ENCODE measurements at regions of chr4 and their contacts with region 1.

Region 1: GRCh38 chr4:182143822-182144625 is 99.2 kb upstream of the TENM3 start:
- DNase-seq: no peak
- ATAC-seq: peak in 1 of 2 donors; percentile 31
- H3K4me3 ChIP-seq: peak overlapping the region; percentile 62 to 73 (median 64)
- H3K27ac ChIP-seq: no peak overlapping the region
- H3K4me1 ChIP-seq: peaks cover 0 to 13% of the 10 kb centered on the region in 2 donors
- H3K27me3 ChIP-seq: peaks cover 56 to 85% (median 83%) of the 10 kb centered on the region in 3 donors
- CTCF ChIP-seq: no peak
- POLR2A ChIP-seq: no peak

Region 2: GRCh38 chr4:182207830-182208396 is 63.9 kb after region 1 on chr4:
- in situ Hi-C with region 1: no loop called
- intact Hi-C with region 1: loop called (anchors 5 kb)
- DNase-seq: no peak
- ATAC-seq: peak; percentile 62 to 78
- H3K4me3 ChIP-seq: no peak overlapping the region
- H3K27ac ChIP-seq: peak overlapping the region in 1 of 4 donors; percentile 19
- H3K4me1 ChIP-seq: peaks cover 2 to 10% of the 10 kb centered on the region in 2 donors
- H3K27me3 ChIP-seq: peaks cover 0 to 3% (median 0%) of the 10 kb centered on the region in 3 donors
- CTCF ChIP-seq: no peak
- POLR2A ChIP-seq: no peak

Measured in gastrocnemius medialis (tissue), 4 donors.